ENCODE measurements at regions of chr11 and their contacts with region 1.

Region 1: GRCh38 chr11:112086422-112087191 is at the starts of genes SDHD and TIMM8B:
- DNase-seq: peak; percentile 96
- H3K4me3 Mint-ChIP-seq: peak within 1 kb of the TSS; percentile 99
- H3K27ac Mint-ChIP-seq: peak within 1 kb of the TSS; percentile 96
- H3K4me1 Mint-ChIP-seq: peaks cover 66% of the 10 kb centered on the region
- H3K27me3 Mint-ChIP-seq: no peaks in the 10 kb centered on the region
- total RNA-seq, gene SDHD: 95.4 and 98.0 TPM in 2 replicates
- total RNA-seq, gene TIMM8B: 85.6 and 89.2 TPM in 2 replicates

Region 2: DNA sequence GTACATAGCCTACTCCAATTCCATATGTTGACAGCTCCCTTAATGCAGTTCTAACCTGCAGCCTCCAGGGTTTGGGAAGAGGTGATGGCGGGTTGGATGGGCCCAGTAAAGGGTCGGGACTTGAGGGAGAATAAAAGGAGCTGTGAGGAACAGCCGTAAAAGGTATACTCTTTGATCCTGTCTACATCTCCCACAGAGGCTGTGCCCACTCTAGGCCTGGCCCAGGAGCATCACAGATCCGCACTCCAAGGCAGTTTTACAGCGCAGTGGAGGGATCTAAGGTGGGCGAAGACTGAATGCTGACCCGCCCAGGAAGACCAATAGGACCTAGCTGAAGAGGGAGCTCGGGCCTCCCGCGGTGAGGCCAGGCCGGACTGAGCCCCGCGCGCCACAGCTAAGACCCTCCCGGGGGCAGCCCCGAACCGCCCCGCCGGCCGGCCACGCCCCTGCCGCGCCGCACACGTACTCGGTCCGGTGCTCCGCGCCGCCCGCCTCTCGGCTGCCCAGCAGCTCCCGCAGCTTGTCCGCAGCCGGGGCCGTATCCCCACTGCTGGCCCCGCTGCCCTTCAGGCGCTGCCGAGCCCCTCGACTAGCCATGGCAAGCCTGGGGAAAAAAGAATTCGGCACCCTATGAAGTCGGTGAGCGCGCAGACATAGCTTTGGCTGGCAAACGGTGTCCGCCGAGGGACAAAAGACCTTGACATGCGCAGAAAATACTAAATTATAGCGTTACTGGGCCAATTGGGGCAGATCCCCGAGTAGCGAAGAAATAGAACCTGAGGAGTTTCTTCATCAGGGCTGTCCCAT is 215.5 kb before region 1 on chr11 and contains the start of gene ALG9:
- intact Hi-C with region 1: loop called (anchors 2 kb)
- DNase-seq: peak; percentile 85
- H3K4me3 Mint-ChIP-seq: peak within 1 kb of the TSS; percentile 89
- H3K27ac Mint-ChIP-seq: peak within 1 kb of the TSS; percentile 90
- H3K4me1 Mint-ChIP-seq: peaks cover 32% of the 10 kb centered on the region
- H3K27me3 Mint-ChIP-seq: no peaks in the 10 kb centered on the region
- total RNA-seq, gene ALG9: 29.3 and 31.8 TPM in 2 replicates

Region 3: DNA sequence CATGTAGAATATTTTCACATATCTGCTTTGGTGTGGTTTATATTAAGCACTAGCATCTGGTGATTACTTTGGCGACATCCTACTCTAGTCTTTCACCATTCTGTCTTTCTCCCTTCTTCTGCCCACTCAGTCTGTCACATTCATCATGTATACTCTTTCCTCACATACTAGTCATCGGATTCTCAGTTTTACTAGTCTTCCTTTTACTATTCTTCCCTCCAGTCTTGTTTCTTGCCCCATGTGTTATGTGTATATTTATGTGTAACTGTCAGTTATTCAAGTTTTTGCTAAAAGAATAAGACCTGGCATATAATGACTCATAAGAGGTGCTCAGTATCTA is 154.0 kb before region 1 on chr11:
- intact Hi-C with region 1: loop called (anchors 1 kb)
- DNase-seq: no peak
- H3K4me3 Mint-ChIP-seq: no peak overlapping the region
- H3K27ac Mint-ChIP-seq: peak overlapping the region; percentile 24
- H3K4me1 Mint-ChIP-seq: peaks cover 34% of the 10 kb centered on the region
- H3K27me3 Mint-ChIP-seq: peaks cover 2% of the 10 kb centered on the region

Region 4: DNA sequence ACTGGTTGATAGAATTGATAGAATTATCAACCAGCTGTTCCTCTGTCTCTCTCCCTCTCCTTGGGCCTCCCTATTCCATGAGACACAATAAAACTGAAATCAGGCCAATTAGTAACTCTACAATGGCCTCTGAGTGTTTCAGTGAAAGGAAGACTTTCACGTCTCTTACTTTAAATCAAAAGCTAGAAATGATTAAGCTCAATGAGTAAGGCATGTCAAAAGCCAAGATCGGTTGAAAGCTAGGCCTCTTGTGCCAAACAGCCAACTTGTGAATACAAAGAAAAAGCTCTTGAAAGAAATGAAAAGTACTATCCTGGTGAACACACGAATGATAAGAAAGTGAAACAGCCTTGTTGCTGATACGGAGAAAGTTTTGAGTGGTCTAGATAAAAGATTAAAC is 29.4 kb before region 1 on chr11:
- intact Hi-C with region 1: loop called (anchors 1 kb)
- DNase-seq: no peak
- H3K4me3 Mint-ChIP-seq: peak overlapping the region; percentile 9
- H3K27ac Mint-ChIP-seq: peak overlapping the region; percentile 74
- H3K4me1 Mint-ChIP-seq: peaks cover 13% of the 10 kb centered on the region
- H3K27me3 Mint-ChIP-seq: no peaks in the 10 kb centered on the region

Region 5: DNA sequence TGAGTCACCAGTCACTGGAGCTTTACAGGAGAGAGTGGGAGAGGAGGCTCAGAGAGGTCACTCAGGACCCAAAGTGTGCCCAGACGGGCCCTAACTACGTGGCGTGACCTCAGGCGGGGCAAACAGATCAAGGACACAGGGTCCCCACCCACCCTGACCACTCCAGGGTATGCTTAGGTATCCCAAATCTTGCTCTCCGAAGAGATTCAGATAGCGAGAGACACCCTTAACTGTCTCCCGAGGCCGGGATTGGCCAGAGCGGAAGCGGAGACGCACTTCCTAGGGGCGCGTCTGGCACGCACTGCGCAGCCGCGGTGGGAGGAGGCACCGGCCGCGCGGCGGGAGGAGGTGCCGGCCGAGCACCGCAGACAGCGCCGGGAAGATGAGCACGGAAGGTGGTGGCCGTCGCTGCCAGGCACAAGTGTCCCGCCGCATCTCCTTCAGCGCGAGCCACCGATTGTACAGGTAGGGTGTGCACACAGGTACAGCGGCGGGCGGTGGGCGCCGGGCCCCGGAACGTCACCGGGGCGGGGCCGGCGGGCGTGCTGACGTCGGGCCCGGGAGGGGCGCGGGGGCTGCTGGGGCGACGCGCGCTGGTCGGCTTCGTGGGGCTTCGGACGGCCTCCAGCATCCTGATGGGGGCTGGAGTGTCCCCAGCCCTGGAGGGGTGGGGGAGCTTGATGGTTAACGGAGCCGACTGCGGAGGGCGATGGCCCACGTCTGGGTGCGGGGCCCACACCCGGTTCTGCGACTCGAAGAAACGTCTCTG is 139.6 kb after region 1 on chr11 and contains the start of gene PTS:
- intact Hi-C with region 1: loop called (anchors 1 kb)
- DNase-seq: peak; percentile 83
- H3K4me3 Mint-ChIP-seq: peak within 1 kb of the TSS; percentile 84
- H3K27ac Mint-ChIP-seq: peak within 1 kb of the TSS; percentile 91
- H3K4me1 Mint-ChIP-seq: peaks cover 29% of the 10 kb centered on the region
- H3K27me3 Mint-ChIP-seq: peaks cover 1% of the 10 kb centered on the region
- total RNA-seq, gene PTS: 28.9 and 35.0 TPM in 2 replicates

Region 6: DNA sequence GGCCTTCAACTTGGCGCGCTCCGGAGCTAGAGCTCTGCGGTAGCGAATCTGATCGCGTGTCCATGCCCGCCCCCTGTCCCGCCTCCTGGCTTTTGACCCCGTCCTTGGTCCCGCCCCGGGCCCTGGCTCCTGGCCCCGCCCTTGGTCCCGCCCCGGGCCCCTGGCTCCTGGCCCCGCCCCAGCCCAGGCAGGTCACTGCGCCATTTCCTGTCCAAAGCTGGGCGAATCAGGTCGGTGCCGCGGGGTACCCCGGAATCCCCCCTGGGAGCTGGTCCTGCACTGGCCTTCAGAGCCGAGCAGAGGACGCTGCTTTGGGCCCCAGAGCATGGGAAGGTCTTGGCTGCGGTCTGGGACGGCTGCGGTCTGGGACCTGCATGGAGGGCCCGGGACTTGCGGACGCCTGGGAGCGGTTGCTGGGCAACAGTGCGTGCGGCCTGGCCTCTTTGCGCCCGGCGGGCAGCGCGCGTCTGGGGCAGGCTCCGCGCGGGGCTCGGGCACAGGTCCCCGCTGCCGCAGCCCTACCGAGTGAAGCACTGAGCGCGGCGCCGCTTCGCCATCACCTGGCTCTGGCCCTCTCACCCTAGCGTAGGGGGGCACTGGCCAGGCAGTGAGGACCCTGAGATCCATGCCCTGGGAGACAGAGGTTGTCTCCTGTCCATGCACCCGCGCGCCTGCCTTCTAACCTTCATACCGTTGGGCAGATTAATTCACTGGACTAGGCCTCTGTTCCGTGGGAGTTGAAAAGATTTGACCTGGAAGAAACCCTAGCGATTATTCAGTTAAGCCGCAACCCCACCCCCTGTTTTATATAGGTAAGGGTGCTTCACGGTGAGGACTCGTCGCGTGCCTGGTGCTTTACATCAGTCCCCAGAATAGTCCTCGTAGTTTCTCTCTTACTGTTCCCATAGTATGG is 1228.0 kb after region 1 on chr11 and contains the start of gene TTC12:
- intact Hi-C with region 1: loop called (anchors 1 kb)
- DNase-seq: peak; percentile 89
- H3K4me3 Mint-ChIP-seq: peak within 1 kb of the TSS; percentile 81
- H3K27ac Mint-ChIP-seq: peak within 1 kb of the TSS; percentile 70
- H3K4me1 Mint-ChIP-seq: peaks cover 20% of the 10 kb centered on the region
- H3K27me3 Mint-ChIP-seq: no peaks in the 10 kb centered on the region
- total RNA-seq, gene TTC12: 7.4 and 8.5 TPM in 2 replicates